Common myeloid progenitor, CD34-positive (primary cell): ENCODE measurements at regions of chr15 and their contacts with region 1.

Region 1: GRCh38 chr15:31326156-31326732 is 391 bp upstream of the KLF13 start:
- DNase-seq: peak; percentile 96 to 99 (median 99)
- H3K4me3 ChIP-seq: peak overlapping the region; percentile 38 to 86 (median 74)
- H3K27ac ChIP-seq: peak overlapping the region; percentile 86 to 93
- H3K4me1 ChIP-seq: peaks cover 12 to 56% (median 49%) of the 10 kb centered on the region in 4 experiments
- H3K27me3 ChIP-seq: no peaks in the 10 kb centered on the region

Region 2: DNA sequence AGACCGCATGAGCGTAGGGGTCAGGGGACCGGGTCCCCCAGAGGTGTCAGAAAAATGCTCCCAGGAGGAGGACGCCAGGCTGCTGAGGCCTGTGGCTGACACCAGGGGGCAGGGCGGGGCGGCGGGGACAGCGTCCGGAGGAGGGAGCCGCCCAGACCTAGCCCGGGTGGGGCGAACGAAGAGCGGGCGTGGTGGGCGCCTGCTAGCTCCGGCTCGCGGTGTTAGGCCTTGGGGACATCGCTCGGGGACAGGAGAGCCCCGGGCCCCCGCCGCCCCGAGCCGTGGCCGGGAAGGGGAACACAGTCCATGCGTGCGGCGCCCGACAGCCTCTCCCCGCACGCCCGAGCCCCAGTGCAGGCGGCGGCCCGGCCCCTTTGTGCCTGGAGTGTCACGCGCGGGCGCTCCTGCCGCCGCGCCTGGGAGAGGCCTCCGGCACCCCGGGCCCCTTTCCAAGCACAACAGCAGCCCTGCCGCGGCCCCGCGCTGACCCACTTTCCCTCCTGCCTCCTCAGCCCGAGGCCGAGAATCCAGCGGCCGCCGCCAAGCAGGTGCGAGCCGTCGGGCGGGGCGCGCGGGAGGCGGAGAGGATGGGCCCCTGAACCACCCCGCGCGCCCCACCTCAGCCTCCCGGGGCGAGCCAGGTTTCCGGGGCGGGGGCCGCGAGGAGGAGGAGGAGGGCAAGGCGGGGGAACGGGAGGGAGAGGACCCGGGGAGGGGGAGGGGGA is 110.6 kb before region 1 on chr15:
- CTCF ChIA-PET with region 1: no interaction called
- POLR2A ChIA-PET with region 1: interaction called, 16 read pairs
- DNase-seq: peak; percentile 65 to 84 (median 76)
- H3K4me3 ChIP-seq: peak overlapping the region; percentile 33 to 77 (median 59)
- H3K27ac ChIP-seq: no peak overlapping the region
- H3K4me1 ChIP-seq: peaks cover 3 to 48% (median 17%) of the 10 kb centered on the region in 4 experiments
- H3K27me3 ChIP-seq: no peaks in the 10 kb centered on the region

Region 3: DNA sequence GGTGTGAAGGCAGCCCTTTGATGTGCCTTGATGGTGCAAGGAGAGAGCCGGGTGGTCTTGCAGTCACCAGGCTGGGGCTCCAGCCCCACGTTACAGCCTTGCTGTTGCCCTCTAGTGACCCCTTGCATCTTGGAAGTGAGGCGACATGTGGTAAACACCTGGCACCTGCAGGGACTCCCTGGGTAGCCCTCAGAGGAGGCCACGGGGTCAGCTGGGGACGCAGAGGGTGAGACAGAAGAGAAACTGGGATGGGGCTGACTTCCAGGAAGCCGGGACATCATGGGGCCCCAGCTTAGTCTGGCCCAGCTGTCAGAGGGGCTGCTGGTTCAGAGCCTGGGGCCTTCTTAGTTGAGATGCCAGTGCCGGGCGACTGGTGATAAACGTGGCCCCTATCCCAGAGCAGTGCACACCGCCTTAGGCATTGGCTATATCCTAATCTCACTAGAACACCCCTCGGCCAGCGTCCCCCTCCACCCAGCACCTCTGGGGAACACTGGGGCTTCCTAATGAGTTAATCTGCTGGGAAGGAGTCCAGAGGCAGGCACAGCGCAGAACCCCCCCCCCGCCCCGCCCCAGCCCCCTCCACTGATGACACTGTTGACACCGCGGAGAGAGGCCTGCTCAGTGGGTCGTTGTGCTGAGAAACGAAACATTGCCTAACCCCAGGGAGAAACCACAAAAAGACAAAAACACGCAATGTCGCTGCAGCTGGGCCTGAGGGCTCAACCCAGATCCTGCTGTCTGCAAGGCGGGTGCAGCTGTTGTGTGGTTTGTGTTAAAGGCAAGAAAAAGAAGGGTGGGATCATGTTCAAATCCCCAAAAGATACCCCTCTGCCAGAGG is 60.2 kb before region 1 on chr15:
- CTCF ChIA-PET with region 1: interaction called, 21 read pairs
- POLR2A ChIA-PET with region 1: interaction called, 47 read pairs
- DNase-seq: peak; percentile 75 to 98 (median 97)
- H3K4me3 ChIP-seq: peak overlapping the region in 3 of 7 experiments; percentile 12 to 39 (median 29)
- H3K27ac ChIP-seq: peak overlapping the region in 1 of 2 experiments; percentile 43
- H3K4me1 ChIP-seq: peaks cover 16 to 85% (median 76%) of the 10 kb centered on the region in 4 experiments
- H3K27me3 ChIP-seq: no peaks in the 10 kb centered on the region

Region 4: DNA sequence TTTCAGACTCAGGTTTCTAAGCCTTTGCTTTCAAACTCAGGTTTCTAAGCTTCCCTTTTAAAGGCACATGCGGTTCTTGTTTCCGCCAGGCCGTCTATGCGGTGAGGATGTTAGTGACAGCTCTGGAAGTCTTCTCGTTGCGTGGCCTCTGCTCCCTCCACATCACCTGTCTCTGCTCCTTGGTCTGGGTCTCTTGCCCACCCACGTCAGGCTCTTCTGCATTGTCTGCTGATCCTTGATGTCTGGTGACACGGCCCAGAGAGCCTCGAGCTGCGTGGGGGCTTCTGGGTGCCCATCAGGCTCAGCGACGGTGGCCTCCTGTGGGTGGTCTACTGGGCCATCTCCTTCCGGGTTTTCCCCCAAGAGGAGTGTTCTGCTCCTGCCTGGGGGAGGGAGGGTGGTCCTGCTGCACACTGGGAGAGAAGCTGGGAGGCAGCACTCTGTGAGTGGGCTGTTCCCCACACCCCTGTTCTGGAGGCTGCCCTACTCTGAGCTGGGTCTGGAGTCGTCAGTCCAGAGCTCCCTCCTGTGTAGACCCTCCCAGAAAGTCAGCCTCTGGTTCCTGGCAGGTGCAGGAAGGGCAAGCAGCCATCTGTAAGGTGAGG is 31.0 kb after region 1 on chr15:
- CTCF ChIA-PET with region 1: interaction called, 5 read pairs
- POLR2A ChIA-PET with region 1: interaction called, 10 read pairs
- DNase-seq: peak; percentile 46 to 88 (median 79)
- H3K4me3 ChIP-seq: peak overlapping the region in 3 of 7 experiments; percentile 8 to 46 (median 30)
- H3K27ac ChIP-seq: peak overlapping the region in 1 of 2 experiments; percentile 30
- H3K4me1 ChIP-seq: peaks cover 38 to 96% (median 88%) of the 10 kb centered on the region in 4 experiments
- H3K27me3 ChIP-seq: no peaks in the 10 kb centered on the region

Region 5: DNA sequence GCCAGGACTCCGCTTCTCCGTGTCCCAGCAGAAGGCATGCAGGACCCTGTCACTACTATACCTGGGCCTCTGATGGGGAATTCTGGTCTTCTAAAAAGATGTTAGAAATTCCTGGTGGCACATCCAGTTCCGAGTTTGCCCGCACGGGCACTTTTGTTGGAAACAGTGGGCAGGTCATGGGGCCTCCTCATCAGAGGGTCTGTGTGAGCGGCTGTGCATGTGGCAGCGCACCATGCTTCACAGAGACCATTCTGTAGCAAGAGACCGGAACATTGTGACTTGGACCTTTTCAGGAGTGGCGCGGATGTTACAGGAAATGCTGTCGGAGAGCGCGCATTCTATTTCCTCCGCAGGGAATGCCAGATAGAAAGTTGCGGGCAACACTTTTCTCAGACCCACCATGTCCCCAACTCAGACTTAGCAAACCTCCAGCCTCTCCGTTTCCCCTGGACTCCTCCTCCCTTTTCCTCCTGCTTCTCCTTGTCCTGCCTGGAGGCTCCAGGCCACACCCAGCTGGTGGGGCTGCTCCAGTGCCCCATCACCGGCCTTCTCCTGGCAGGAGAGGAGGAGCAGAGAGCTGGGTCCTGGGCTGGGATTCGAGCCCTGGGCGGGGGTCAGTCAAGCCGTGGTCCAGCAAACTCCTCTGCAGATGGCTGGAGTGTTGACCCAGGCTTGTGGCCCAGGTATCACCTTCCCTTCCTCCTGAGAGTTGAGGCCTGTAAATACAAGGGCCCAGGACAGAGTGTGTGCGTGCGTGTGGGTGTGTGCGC is 47.0 kb after region 1 on chr15:
- CTCF ChIA-PET with region 1: no interaction called
- POLR2A ChIA-PET with region 1: no interaction called
- DNase-seq: no peak
- H3K4me3 ChIP-seq: no peak overlapping the region
- H3K27ac ChIP-seq: no peak overlapping the region
- H3K4me1 ChIP-seq: peaks cover 0 to under 1% (median 0%) of the 10 kb centered on the region in 4 experiments
- H3K27me3 ChIP-seq: no peaks in the 10 kb centered on the region